H1 (cell line): ENCODE measurements at regions of chr6 and their contacts with region 1.

Region 1: GRCh38 chr6:43053545-43054205 is at the start of gene CUL7:
- DNase-seq: peak; percentile 73 to 88
- H3K4me3 ChIP-seq: peak within 1 kb of the TSS; percentile 72 to 91 (median 78)
- H3K27ac ChIP-seq: peak within 1 kb of the TSS; percentile 87
- H3K4me1 ChIP-seq: peaks cover 4 to 15% (median 7%) of the 10 kb centered on the region in 4 experiments; a peak in 6 of 7 replicates
- H3K27me3 ChIP-seq: no peaks in the 10 kb centered on the region
- CTCF ChIP-seq: no peak
- EP300 ChIP-seq: no peak
- POLR2A ChIP-seq: peak in 1 of 2 experiments; percentile 92; a peak in 2 of 3 replicates
- RAD21 ChIP-seq: 0 out of 4 replicates have a peak, but pooled peaks of 1 of the 2 experiments have one; percentile 0
- total RNA-seq, gene CUL7: 10.8 and 11.4 TPM in 2 replicates

Region 2: DNA sequence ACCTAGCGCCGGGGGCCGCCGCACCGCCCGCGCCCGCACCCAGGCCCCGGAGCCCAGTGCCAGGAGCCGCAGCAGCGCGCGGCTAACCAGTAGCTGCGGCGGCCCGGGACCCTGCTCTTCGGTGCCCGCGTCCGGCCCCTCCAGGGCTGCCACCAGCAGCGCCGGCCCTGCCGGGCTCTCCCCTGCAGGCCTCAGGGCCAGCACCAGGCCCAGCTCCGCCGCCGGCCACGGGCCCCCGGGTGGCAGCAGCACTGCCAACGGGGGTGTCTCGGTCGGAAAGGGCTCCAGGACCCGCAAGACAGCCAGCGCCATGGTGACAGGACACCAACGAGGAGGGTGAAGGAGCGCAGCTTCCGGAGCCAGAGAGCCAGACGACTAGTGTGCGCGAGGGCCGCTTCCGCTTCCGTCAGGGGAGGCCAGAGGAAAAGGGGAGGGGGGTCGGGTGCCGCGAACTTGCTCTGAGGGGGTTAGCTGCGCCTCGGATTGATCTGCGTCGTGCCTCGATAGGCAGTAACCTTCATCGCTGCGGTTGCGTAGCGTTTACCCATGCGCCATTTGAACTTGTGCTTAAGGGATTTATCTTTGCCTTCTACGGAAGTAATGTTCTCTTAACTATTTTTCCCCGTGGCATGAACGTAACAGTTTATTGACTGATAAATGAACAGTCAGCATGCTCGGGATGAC is 74.7 kb before region 1 on chr6 and contains the start of gene PEX6:
- CTCF ChIA-PET with region 1: interaction called, 3 read pairs
- POLR2A ChIA-PET with region 1: interaction called, 12 read pairs
- DNase-seq: peak; percentile 76 to 89
- H3K4me3 ChIP-seq: peak within 1 kb of the TSS; percentile 67 to 92 (median 70)
- H3K27ac ChIP-seq: no peak within 1 kb of the TSS
- H3K4me1 ChIP-seq: peaks cover 4 to 10% (median 6%) of the 10 kb centered on the region in 4 experiments; a peak in 3 of 7 replicates
- H3K27me3 ChIP-seq: no peaks in the 10 kb centered on the region
- CTCF ChIP-seq: no peak; a peak in 1 of 4 replicates
- EP300 ChIP-seq: no peak
- POLR2A ChIP-seq: peak; percentile 68 to 69; a peak in 2 of 3 replicates
- RAD21 ChIP-seq: no peak
- total RNA-seq, gene PEX6: 11.7 and 12.5 TPM in 2 replicates

Region 3: GRCh38 chr6:43037706-43038105 is 16.0 kb before region 1 on chr6:
- CTCF ChIA-PET with region 1: interaction called, 5 read pairs
- POLR2A ChIA-PET with region 1: interaction called, 584 read pairs
- DNase-seq: no peak
- H3K4me3 ChIP-seq: no peak overlapping the region
- H3K27ac ChIP-seq: no peak overlapping the region
- H3K4me1 ChIP-seq: no peaks in the 10 kb centered on the region
- H3K27me3 ChIP-seq: no peaks in the 10 kb centered on the region
- CTCF ChIP-seq: no peak
- EP300 ChIP-seq: no peak
- POLR2A ChIP-seq: no peak
- RAD21 ChIP-seq: no peak

Region 4: DNA sequence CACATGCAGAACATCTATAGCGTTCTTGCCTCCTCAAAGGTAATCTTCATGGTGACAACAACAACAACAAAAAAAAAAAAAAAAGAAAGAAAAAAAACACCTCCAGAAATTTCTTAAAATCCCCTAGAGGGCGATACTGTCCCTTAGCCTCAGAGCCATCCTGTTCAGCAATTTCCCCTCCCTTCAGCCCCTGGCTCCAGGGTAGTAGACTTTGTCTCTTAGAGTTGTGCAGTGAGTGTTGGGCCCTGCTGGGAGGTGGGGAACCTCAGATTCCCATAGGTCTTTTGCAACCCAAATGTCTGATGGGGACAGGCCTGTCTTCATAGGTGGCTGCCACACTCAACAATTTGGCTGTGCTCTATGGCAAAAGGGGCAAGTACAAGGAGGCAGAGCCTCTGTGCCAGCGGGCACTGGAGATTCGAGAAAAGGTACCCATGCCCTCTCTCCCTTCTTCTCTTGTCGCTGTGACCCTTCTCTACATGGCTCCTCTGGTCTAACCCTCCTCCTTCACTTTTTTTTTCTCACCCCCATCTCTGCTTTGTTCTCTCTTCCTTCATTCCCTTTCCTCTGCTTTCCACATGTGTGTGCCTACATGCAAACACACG is 16.5 kb after region 1 on chr6:
- CTCF ChIA-PET with region 1: interaction called, 9 read pairs
- POLR2A ChIA-PET with region 1: interaction called, 43 read pairs
- DNase-seq: no peak
- H3K4me3 ChIP-seq: no peak overlapping the region
- H3K27ac ChIP-seq: no peak overlapping the region
- H3K4me1 ChIP-seq: peaks cover 0 to 8% (median 3%) of the 10 kb centered on the region in 4 experiments; a peak in 4 of 7 replicates
- H3K27me3 ChIP-seq: no peaks in the 10 kb centered on the region
- CTCF ChIP-seq: peak; percentile 25 to 73 (median 48)
- EP300 ChIP-seq: no peak
- POLR2A ChIP-seq: no peak
- RAD21 ChIP-seq: peak; percentile 81

Region 5: GRCh38 chr6:43174263-43175112 is 120.8 kb after region 1 on chr6:
- CTCF ChIA-PET with region 1: no interaction called
- POLR2A ChIA-PET with region 1: interaction called, 25 read pairs
- DNase-seq: peak; percentile 90 to 95
- H3K4me3 ChIP-seq: peak overlapping the region; percentile 27 to 86 (median 38)
- H3K27ac ChIP-seq: peak overlapping the region; percentile 77; the same call in 1 of the 2 replicates
- H3K4me1 ChIP-seq: peaks cover 9 to 17% (median 11%) of the 10 kb centered on the region in 4 experiments
- H3K27me3 ChIP-seq: peaks cover 0 to 6% (median 2%) of the 10 kb centered on the region in 4 experiments; a peak in 3 of 7 replicates
- CTCF ChIP-seq: no peak; a peak in 1 of 4 replicates
- EP300 ChIP-seq: no peak; a peak in 1 of 3 replicates
- POLR2A ChIP-seq: peak in 1 of 2 experiments; percentile 59; a peak in 2 of 3 replicates
- RAD21 ChIP-seq: peak in 1 of 2 experiments; percentile 11; a peak in 1 of 4 replicates